Transverse colon (tissue), 4 donors: ENCODE measurements at regions of chr12 and their contacts with region 1.

Region 1: GRCh38 chr12:129911428-129912049 is 7.7 kb upstream of the TMEM132D start:
- DNase-seq: peak; percentile 33
- H3K4me3 ChIP-seq: no peak overlapping the region
- H3K27ac ChIP-seq: no peak overlapping the region
- H3K4me1 ChIP-seq: no peaks in the 10 kb centered on the region
- H3K27me3 ChIP-seq: no peaks in the 10 kb centered on the region
- CTCF ChIP-seq: peak; percentile 53 to 74 (median 59)
- EP300 ChIP-seq: no peak
- POLR2A ChIP-seq: no peak

Region 2: GRCh38 chr12:128463881-128464280 is 1447.7 kb before region 1 on chr12:
- in situ Hi-C with region 1: no loop called
- intact Hi-C with region 1: loop called (anchors 5 kb)
- DNase-seq: no peak
- H3K4me3 ChIP-seq: no peak overlapping the region
- H3K27ac ChIP-seq: no peak overlapping the region
- H3K4me1 ChIP-seq: no peaks in the 10 kb centered on the region
- H3K27me3 ChIP-seq: no peaks in the 10 kb centered on the region
- CTCF ChIP-seq: no peak
- EP300 ChIP-seq: no peak
- POLR2A ChIP-seq: no peak

Region 3: GRCh38 chr12:128783129-128783574 is 1128.4 kb before region 1 on chr12:
- in situ Hi-C with region 1: loop called in 2 of 4 experiments (anchors 25 kb)
- intact Hi-C with region 1: no loop called
- DNase-seq: no peak
- H3K4me3 ChIP-seq: no peak overlapping the region
- H3K27ac ChIP-seq: no peak overlapping the region
- H3K4me1 ChIP-seq: no peaks in the 10 kb centered on the region
- H3K27me3 ChIP-seq: no peaks in the 10 kb centered on the region
- CTCF ChIP-seq: no peak
- EP300 ChIP-seq: no peak
- POLR2A ChIP-seq: no peak

Region 4: GRCh38 chr12:128969480-128970055 is 942.0 kb before region 1 on chr12:
- in situ Hi-C with region 1: loop called in 1 of 4 experiments (anchors 25 kb)
- intact Hi-C with region 1: no loop called
- DNase-seq: peak; percentile 20
- H3K4me3 ChIP-seq: no peak overlapping the region
- H3K27ac ChIP-seq: no peak overlapping the region
- H3K4me1 ChIP-seq: no peaks in the 10 kb centered on the region
- H3K27me3 ChIP-seq: peaks cover 22% of the 10 kb centered on the region
- CTCF ChIP-seq: peak in 2 of 5 experiments; percentile 9 to 34
- EP300 ChIP-seq: no peak
- POLR2A ChIP-seq: no peak

Region 5: GRCh38 chr12:128976120-128976738 is 935.3 kb before region 1 on chr12:
- in situ Hi-C with region 1: loop called in 2 of 4 experiments (anchors 25 kb)
- intact Hi-C with region 1: no loop called
- DNase-seq: peak; percentile 65
- H3K4me3 ChIP-seq: no peak overlapping the region
- H3K27ac ChIP-seq: no peak overlapping the region
- H3K4me1 ChIP-seq: no peaks in the 10 kb centered on the region
- H3K27me3 ChIP-seq: peaks cover 22% of the 10 kb centered on the region
- CTCF ChIP-seq: peak in 2 of 5 experiments; percentile 35 to 36
- EP300 ChIP-seq: no peak
- POLR2A ChIP-seq: no peak

Region 6: DNA sequence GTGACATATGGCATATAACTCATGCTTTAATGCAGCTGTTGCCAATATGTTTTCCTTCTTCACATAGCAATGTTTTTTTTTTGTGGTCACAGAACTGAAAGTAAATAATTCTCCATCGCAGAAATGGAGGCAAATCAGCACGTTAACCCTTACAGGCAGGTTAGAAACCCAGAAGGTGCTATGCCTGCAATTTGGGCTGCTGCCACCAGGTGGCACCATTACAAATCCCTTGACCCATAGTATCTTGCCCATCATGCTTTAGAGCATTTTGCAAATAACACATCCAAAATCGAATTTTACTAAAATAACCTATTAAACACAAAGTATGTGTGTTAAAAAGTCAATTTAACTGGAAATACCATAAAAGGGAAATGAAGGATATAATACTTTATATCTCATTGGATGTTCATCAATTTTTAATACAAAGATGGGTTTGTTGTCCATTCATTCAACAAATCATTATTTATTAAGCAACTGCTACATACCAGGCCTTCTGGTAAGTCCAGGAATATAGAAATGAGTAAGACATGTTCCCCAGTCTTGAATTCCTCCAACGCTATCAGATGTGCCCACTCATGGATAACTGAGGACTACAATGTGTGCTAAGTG is 718.2 kb before region 1 on chr12:
- in situ Hi-C with region 1: loop called in 1 of 4 experiments (anchors 25 kb)
- intact Hi-C with region 1: no loop called
- DNase-seq: peak; percentile 40
- H3K4me3 ChIP-seq: no peak overlapping the region
- H3K27ac ChIP-seq: no peak overlapping the region
- H3K4me1 ChIP-seq: peaks cover 0 to 4% (median 2%) of the 10 kb centered on the region in 4 donors
- H3K27me3 ChIP-seq: no peaks in the 10 kb centered on the region
- CTCF ChIP-seq: peak; percentile 43 to 79 (median 56)
- EP300 ChIP-seq: no peak
- POLR2A ChIP-seq: no peak

Region 7: DNA sequence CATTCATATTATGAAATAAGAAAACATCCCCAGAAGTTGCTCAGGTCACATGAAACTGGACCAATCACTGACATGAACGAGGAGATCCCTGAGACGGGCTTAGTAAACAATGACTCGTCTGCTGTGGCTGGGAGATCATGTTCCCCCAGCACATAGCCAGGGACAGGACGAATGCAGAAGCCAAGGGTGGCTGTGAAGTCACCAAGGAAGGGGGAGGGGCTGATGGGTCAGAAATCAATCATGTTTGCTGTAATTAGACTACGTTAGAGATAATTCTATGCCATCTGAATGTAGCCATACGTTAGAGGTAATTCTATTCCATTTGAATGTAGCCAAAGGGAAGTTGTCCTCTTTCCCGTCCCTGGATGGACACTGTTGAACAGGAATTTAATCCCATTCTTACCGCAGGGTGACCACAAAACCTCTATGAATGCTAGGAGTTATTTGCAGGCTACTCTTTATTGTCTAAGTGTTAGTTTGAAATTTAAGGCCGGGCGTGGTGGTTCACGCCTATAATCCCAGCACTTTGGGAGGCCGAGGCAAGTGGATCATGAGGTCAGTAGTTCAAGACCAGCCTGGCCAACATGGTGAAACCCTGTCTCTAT is 340.6 kb before region 1 on chr12:
- in situ Hi-C with region 1: no loop called
- intact Hi-C with region 1: no loop called
- DNase-seq: no peak
- H3K4me3 ChIP-seq: no peak overlapping the region
- H3K27ac ChIP-seq: no peak overlapping the region
- H3K4me1 ChIP-seq: no peaks in the 10 kb centered on the region
- H3K27me3 ChIP-seq: no peaks in the 10 kb centered on the region
- CTCF ChIP-seq: no peak
- EP300 ChIP-seq: no peak
- POLR2A ChIP-seq: no peak

Region 8: DNA sequence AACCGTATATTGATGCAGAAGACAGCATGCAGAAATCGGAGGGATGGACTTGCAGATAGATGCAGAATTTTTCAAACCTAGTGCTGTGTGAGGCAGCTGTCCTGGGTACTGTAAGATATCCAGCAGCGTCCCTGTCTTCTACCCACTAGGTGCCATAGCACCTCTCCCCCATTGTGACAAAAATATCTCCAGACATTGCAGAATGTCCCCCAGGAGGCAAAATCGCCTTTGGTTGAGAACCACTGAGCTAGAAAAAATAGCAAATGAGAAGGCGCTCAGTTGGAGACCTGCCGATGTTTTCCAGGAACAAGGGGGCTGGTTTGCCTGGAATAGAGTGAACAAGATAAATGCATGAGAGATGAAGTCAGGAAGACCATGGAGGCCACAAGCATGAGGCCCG is 60.2 kb after region 1 on chr12:
- in situ Hi-C with region 1: no loop called
- intact Hi-C with region 1: no loop called
- DNase-seq: no peak
- H3K4me3 ChIP-seq: no peak overlapping the region
- H3K27ac ChIP-seq: no peak overlapping the region
- H3K4me1 ChIP-seq: no peaks in the 10 kb centered on the region
- H3K27me3 ChIP-seq: no peaks in the 10 kb centered on the region
- CTCF ChIP-seq: no peak
- EP300 ChIP-seq: no peak
- POLR2A ChIP-seq: no peak